T-cell (primary cell): ENCODE measurements at regions of chr1 and their contacts with region 1.

Region 1: GRCh38 chr1:165352442-165353293 is 3.8 kb downstream of the LMX1A start:
- DNase-seq: no peak
- ATAC-seq: no peak
- H3K4me3 ChIP-seq: no peak overlapping the region
- H3K4me3 Mint-ChIP-seq: no peak overlapping the region
- H3K27ac ChIP-seq: no peak overlapping the region
- H3K27ac Mint-ChIP-seq: no peak overlapping the region
- H3K4me1 ChIP-seq: no peaks in the 10 kb centered on the region
- H3K4me1 Mint-ChIP-seq: peaks cover 17 to 26% (median 17%) of the 10 kb centered on the region in 3 donors
- H3K27me3 ChIP-seq: peaks cover 25 to 52% of the 10 kb centered on the region in 2 experiments
- H3K27me3 Mint-ChIP-seq: peaks cover 70 to 87% of the 10 kb centered on the region in 2 donors

Region 2: GRCh38 chr1:165467706-165468105 is 115.0 kb after region 1 on chr1:
- CTCF ChIA-PET with region 1: no interaction called
- POLR2A ChIA-PET with region 1: no interaction called
- DNase-seq: no peak
- ATAC-seq: no peak
- H3K4me3 ChIP-seq: no peak overlapping the region
- H3K4me3 Mint-ChIP-seq: no peak overlapping the region
- H3K27ac ChIP-seq: no peak overlapping the region
- H3K27ac Mint-ChIP-seq: no peak overlapping the region
- H3K4me1 ChIP-seq: no peaks in the 10 kb centered on the region
- H3K4me1 Mint-ChIP-seq: no peaks in the 10 kb centered on the region
- H3K27me3 ChIP-seq: peaks cover 0 to 11% of the 10 kb centered on the region in 2 experiments
- H3K27me3 Mint-ChIP-seq: peaks cover 17 to 27% of the 10 kb centered on the region in 2 donors

Region 3: DNA sequence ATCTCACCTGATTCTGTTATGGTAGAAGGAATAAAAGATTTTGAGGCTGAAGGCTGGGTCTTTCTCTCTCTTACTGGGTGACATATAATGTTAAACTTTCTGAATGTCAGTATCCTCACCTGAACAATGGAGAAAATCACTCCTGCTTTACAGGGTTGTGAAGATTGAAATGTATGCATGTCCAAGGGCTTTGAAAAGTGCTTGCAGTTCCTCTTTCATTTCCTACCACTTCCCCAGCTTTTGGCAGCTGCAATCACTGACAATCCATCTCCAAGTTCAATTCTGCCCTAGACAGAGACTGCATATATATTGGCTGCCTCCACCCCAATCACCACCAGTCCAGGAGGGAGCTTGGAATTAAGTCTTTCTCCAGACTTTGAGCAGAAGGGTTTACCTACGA is 774.3 kb after region 1 on chr1:
- CTCF ChIA-PET with region 1: interaction called in 1 of 2 experiments, 11 read pairs
- POLR2A ChIA-PET with region 1: no interaction called
- DNase-seq: no peak
- ATAC-seq: no peak
- H3K4me3 ChIP-seq: no peak overlapping the region
- H3K4me3 Mint-ChIP-seq: no peak overlapping the region
- H3K27ac ChIP-seq: no peak overlapping the region
- H3K27ac Mint-ChIP-seq: no peak overlapping the region
- H3K4me1 ChIP-seq: no peaks in the 10 kb centered on the region
- H3K4me1 Mint-ChIP-seq: no peaks in the 10 kb centered on the region
- H3K27me3 ChIP-seq: no peaks in the 10 kb centered on the region
- H3K27me3 Mint-ChIP-seq: peaks cover 0 to 2% of the 10 kb centered on the region in 2 donors